ENCODE measurements at regions of chr19 and their contacts with region 1.

Region 1: GRCh38 chr19:14363183-14364097 is 17.8 kb upstream of the ADGRE5 start:
- DNase-seq: peak; percentile 89
- ATAC-seq: peak; percentile 73

Region 2: GRCh38 chr19:14175351-14175792 is 188.1 kb before region 1 on chr19:
- intact Hi-C with region 1: no loop called
- DNase-seq: no peak
- ATAC-seq: no peak

Region 3: GRCh38 chr19:14405758-14406644 is 42.6 kb after region 1 on chr19:
- intact Hi-C with region 1: loop called (anchors 5 kb)
- DNase-seq: peak; percentile 93
- ATAC-seq: peak; percentile 87